GM12878 (cell line): ENCODE measurements at regions of chr6 and their contacts with region 1.

Region 1: DNA sequence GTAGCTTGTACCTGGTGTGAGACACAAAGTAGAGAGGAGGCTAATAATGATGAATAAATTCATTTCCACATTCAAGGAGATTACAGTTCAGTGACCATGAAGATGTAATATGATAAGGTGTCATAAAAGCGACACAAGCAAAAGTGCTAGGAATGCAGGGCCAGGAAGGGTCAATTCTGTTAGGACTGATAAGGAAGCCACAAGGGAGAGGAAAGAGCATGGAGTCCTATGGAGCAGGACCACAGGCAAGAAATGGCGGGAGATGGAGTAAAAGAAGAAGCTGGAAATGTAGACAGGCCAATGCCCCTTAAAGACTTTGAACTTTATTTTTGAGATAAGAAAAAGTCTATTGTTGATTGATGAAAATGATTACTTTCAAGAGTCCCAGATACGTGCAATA is 161.8 kb upstream of the KCNK16 start:
- DNase-seq: no peak
- ATAC-seq: no peak
- H3K4me3 ChIP-seq: no peak overlapping the region
- H3K27ac ChIP-seq: no peak overlapping the region
- H3K4me1 ChIP-seq: no peaks in the 10 kb centered on the region
- H3K27me3 ChIP-seq: no peaks in the 10 kb centered on the region
- CTCF ChIP-seq: no peak
- EP300 ChIP-seq: no peak
- POLR2A ChIP-seq: no peak
- RAD21 ChIP-seq: no peak

Region 2: DNA sequence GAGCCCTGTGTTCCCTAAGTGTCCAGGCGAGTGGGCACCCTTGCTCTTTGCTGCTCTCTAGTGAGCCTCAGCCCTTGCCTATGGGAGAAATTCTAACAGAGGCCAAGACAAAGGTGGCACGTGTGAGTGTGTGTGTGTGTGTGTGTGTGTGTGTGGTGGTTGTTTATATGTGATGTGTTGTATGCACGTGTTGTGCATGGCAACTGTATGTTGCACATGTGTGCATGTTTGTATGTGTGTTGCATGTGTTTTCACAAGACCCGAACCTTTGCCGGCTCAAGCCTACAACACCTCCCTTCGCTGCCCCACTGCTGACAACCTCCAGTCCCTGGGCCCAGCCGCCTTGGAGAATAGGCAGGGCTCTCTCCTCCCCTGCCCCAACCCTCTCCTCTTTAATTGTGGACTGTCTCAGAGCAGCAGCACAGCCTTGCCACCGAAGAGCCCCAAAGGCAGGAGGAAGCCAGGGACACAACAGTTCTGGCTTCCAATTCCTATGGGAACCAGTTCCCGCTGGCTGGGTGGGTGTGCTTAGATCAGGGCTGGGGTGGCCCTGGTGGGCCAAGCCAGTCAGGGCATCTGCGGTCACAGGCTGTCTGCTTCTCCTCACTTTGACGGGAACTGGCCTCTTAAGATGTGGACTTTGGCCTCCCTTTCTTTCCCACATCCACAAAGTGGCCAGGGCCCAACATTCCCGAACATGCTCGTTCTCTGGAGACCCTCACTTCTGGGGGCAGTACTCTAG is 164.5 kb before region 1 on chr6:
- CTCF ChIA-PET with region 1: no interaction called
- POLR2A ChIA-PET with region 1: no interaction called
- RAD21 ChIA-PET with region 1: no interaction called
- SMC1A ChIA-PET with region 1: no interaction called
- in situ Hi-C with region 1: no loop called
- intact Hi-C with region 1: no loop called
- DNase-seq: no peak
- ATAC-seq: no peak
- H3K4me3 ChIP-seq: no peak overlapping the region
- H3K27ac ChIP-seq: no peak overlapping the region
- H3K4me1 ChIP-seq: no peaks in the 10 kb centered on the region
- H3K27me3 ChIP-seq: peaks cover 0 to 5% of the 10 kb centered on the region in 2 experiments; a peak in 3 of 4 replicates
- CTCF ChIP-seq: no peak
- EP300 ChIP-seq: no peak
- POLR2A ChIP-seq: no peak
- RAD21 ChIP-seq: no peak

Region 3: GRCh38 chr6:39330057-39330456 is 154.2 kb before region 1 on chr6:
- CTCF ChIA-PET with region 1: no interaction called
- POLR2A ChIA-PET with region 1: no interaction called
- RAD21 ChIA-PET with region 1: no interaction called
- SMC1A ChIA-PET with region 1: no interaction called
- in situ Hi-C with region 1: no loop called
- intact Hi-C with region 1: no loop called
- DNase-seq: peak; percentile 27
- ATAC-seq: peak; percentile 97
- H3K4me3 ChIP-seq: no peak overlapping the region
- H3K27ac ChIP-seq: no peak overlapping the region
- H3K4me1 ChIP-seq: peaks cover 7% of the 10 kb centered on the region
- H3K27me3 ChIP-seq: no peaks in the 10 kb centered on the region
- CTCF ChIP-seq: no peak
- EP300 ChIP-seq: no peak
- POLR2A ChIP-seq: no peak
- RAD21 ChIP-seq: no peak

Region 4: DNA sequence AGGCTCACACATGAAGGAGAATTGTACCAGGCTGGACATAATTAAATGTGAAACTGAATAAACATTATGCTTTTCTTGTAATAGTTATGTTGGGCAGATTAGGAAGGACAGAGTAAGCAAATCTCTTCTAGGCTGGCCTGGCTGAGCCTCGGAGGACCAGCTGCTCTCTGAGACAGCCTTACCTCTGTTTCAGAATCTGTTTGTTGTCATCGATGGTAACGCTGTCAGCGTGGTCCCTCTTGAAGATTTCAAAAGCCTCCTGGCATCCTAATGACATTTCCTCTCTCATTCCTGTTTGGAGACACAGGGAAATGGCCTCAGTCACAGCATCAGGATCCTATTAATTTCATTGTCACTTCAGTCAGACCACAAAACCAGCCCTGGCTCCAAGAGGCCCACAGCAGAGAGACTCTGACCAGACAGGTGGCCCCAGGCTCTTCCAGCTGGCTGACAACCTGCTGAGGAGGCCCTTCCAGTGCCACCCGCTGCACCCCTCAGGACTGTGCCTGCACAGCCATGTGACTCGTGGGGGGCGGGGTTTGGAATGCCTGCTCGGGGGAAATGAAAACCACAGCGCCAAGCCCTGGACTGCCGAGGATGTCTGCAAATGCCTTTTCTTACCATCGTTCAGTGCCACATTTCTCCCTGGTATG is 53.3 kb before region 1 on chr6:
- CTCF ChIA-PET with region 1: no interaction called
- POLR2A ChIA-PET with region 1: no interaction called
- RAD21 ChIA-PET with region 1: no interaction called
- SMC1A ChIA-PET with region 1: no interaction called
- in situ Hi-C with region 1: no loop called
- intact Hi-C with region 1: no loop called
- DNase-seq: no peak
- ATAC-seq: peak; percentile 45
- H3K4me3 ChIP-seq: no peak overlapping the region
- H3K27ac ChIP-seq: no peak overlapping the region
- H3K4me1 ChIP-seq: no peaks in the 10 kb centered on the region; the same call in 1 of the 2 replicates
- H3K27me3 ChIP-seq: no peaks in the 10 kb centered on the region
- CTCF ChIP-seq: no peak
- EP300 ChIP-seq: no peak
- POLR2A ChIP-seq: no peak
- RAD21 ChIP-seq: no peak

Region 5: DNA sequence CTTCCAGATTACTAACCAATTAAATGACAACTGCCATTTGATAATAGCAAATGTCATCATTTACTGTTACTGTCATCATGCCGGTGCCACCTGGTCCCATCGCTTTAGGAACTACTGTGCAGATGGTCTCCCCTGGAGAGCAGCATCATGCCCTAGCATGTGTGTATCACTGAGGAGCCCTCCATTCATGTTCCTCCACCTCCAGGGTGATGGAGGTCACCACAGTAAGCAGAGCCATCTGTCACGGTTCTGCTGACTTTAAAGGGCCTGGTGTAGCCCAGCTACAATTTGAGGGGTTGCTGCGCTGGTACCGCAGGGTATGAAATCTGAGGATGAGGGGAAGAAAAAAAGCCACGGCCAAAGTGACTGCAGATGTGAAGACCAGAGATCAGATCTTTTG is 43.0 kb before region 1 on chr6:
- CTCF ChIA-PET with region 1: no interaction called
- POLR2A ChIA-PET with region 1: no interaction called
- RAD21 ChIA-PET with region 1: no interaction called
- SMC1A ChIA-PET with region 1: no interaction called
- in situ Hi-C with region 1: no loop called
- intact Hi-C with region 1: no loop called
- DNase-seq: no peak
- ATAC-seq: no peak
- H3K4me3 ChIP-seq: no peak overlapping the region
- H3K27ac ChIP-seq: no peak overlapping the region
- H3K4me1 ChIP-seq: no peaks in the 10 kb centered on the region
- H3K27me3 ChIP-seq: no peaks in the 10 kb centered on the region
- CTCF ChIP-seq: no peak
- EP300 ChIP-seq: no peak
- POLR2A ChIP-seq: no peak
- RAD21 ChIP-seq: no peak

Region 6: DNA sequence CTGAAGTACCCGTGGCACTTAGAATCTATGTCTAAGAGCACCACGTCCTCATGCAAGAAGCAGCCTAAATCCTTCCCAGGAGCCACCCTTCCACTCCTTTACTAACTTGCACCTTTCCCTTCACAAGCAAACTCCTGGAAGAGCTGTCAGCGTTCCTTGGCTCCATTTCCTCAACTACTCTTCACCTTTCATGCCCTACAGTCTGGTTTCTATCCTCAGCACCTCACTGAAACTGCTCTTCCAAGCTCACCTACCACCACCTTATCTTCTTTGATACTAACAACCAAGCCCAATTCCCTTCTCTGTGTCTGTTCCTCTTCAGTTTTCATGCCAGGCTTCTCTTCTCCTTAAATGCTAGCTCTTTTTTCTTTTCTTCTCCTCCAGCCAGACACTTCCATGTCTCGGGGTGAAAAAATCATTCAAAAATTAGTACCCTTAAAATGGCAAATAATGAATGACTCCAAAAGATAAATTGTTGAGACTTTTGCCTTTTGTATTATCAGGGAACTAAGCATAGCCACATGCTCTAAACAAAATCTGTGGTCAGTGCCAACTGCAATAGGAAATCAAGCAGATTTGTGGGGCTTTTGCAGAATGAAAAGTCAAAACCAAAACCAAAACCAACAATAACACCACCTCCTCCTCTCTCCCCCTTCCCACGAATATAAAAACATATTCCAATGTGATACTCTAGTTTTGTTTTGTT is 12.2 kb before region 1 on chr6:
- CTCF ChIA-PET with region 1: interaction called, 4 read pairs
- POLR2A ChIA-PET with region 1: no interaction called
- RAD21 ChIA-PET with region 1: no interaction called
- SMC1A ChIA-PET with region 1: interaction called, 11 read pairs
- in situ Hi-C with region 1: no loop called
- intact Hi-C with region 1: no loop called
- DNase-seq: peak; percentile 45
- ATAC-seq: peak; percentile 93
- H3K4me3 ChIP-seq: no peak overlapping the region
- H3K27ac ChIP-seq: no peak overlapping the region
- H3K4me1 ChIP-seq: peaks cover 4% of the 10 kb centered on the region; the same call in 1 of the 2 replicates
- H3K27me3 ChIP-seq: no peaks in the 10 kb centered on the region
- CTCF ChIP-seq: no peak
- EP300 ChIP-seq: no peak
- POLR2A ChIP-seq: no peak
- RAD21 ChIP-seq: no peak